ENCODE measurements at regions of chr3 and their contacts with region 1.

Region 1: DNA sequence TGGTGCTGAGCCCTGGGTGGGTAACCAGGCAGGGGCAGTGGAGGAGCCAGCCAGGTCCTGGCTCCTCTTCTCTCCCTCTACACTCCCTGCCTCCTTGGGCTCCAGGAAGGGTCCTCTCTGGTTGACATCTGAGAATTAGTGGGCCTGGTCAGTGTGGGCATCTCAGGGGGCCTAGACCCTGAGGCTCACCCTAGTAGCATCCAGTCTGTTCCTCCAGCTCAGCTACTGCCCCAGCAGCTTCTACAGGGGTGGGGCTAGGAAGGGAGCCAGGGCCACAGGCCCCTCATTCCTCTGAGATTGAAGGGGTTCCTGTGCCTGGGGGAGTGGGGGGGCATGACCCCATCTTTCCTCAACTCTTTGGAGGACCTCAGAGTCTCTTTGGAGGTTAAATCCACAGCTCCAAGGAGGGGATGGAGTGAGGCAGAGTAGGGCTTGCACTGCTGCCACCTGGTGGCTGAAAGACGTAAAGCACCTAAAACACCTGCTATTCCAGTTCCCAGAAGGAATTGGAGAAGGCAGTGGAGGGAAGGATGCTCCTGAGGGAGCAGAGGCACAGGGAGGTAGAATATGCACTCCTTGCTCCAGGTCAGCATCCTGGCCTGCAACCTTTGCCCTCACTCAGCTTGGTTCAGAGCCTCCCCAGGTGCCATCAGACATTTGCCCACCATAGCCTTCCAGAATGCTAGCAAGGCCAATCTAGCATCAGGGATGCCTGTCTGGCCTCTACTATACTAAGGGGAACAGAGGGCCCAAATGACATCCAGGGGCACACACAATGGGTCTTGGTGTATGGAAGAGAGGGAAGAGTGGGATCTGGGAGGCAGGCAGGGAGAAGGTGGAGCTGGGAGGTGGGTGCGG is 25.1 kb downstream of the C3orf18 start:
- DNase-seq: no peak
- H3K4me3 ChIP-seq: no peak overlapping the region
- H3K27ac ChIP-seq: no peak overlapping the region
- H3K4me1 ChIP-seq: no peaks in the 10 kb centered on the region
- H3K27me3 ChIP-seq: peaks cover 0 to 11% (median 0%) of the 10 kb centered on the region in 4 donors
- CTCF ChIP-seq: peak; percentile 81 to 90 (median 89)
- EP300 ChIP-seq: no peak
- POLR2A ChIP-seq: no peak

Region 2: DNA sequence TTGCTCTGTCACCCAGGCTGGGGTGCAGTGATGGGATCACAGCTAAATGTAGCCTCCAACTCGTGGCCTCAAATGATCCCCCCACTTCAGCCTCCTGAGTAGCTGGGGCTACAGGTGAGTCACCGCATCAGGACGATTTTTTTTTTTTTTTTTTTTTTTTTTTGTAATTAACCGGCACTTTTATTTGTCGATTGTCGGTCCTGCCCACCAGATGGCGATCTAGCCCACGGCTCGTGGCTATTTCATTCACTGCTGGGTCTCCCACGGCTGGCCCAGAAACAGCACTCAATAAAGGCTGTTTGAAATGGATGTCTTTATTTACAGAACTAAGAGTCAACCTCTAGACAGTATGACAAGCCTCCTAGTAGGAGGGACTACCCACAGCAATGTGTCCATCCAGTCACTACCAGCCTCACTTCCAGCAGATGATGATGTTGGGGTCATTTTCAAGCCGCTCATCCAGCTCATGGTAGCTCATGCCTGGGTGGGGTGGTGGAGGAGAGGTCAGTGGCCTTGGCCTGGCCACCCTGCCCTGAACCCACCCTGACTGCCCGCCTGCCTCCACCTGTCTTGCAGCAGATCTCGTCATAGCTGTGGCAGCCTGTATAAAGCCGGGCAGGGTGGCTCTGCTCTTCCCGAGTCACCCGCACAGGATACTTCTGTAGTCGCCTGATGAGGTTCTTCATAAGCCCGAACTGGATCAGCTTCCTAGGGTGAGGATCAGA is 195.1 kb before region 1 on chr3:
- intact Hi-C with region 1: loop called (anchors 2 kb)
- DNase-seq: no peak
- H3K4me3 ChIP-seq: no peak overlapping the region
- H3K27ac ChIP-seq: peak overlapping the region in 1 of 4 donors; percentile 60
- H3K4me1 ChIP-seq: peaks cover 42 to 57% (median 54%) of the 10 kb centered on the region in 4 donors
- H3K27me3 ChIP-seq: peaks cover 0 to 3% (median 0%) of the 10 kb centered on the region in 4 donors
- CTCF ChIP-seq: peak; percentile 50 to 54 (median 52)
- EP300 ChIP-seq: no peak
- POLR2A ChIP-seq: no peak

Region 3: GRCh38 chr3:50436114-50436674 is 106.2 kb before region 1 on chr3:
- intact Hi-C with region 1: loop called (anchors 2 kb)
- DNase-seq: no peak
- H3K4me3 ChIP-seq: no peak overlapping the region
- H3K27ac ChIP-seq: no peak overlapping the region
- H3K4me1 ChIP-seq: peaks cover 0 to 6% (median 3%) of the 10 kb centered on the region in 4 donors
- H3K27me3 ChIP-seq: no peaks in the 10 kb centered on the region
- CTCF ChIP-seq: peak; percentile 74 to 85 (median 78)
- EP300 ChIP-seq: no peak
- POLR2A ChIP-seq: no peak

Region 4: DNA sequence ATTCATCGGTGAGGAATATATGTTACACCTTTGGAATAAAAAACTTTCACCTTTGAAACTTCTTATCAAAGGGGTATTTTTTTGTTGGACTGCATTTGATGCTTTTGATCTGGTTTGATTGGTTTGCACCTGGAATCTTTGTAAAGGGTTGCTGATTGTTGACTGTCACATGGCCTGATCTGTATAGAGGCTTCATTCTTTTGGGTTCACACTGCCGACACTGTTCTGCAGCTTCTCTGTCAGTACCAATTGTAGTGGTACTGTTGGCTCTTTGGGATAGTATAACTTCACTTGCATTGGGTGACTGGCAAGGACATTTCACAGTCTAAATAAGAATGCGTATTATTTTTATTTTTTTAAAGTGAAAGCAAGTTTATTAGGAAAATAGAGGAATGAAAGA is 288.0 kb after region 1 on chr3:
- intact Hi-C with region 1: no loop called
- DNase-seq: no peak
- H3K4me3 ChIP-seq: no peak overlapping the region
- H3K27ac ChIP-seq: no peak overlapping the region
- H3K4me1 ChIP-seq: no peaks in the 10 kb centered on the region
- H3K27me3 ChIP-seq: no peaks in the 10 kb centered on the region
- CTCF ChIP-seq: no peak
- EP300 ChIP-seq: no peak
- POLR2A ChIP-seq: no peak